ENCODE measurements at regions of chr17 and their contacts with region 1.

Region 1: GRCh38 chr17:32319548-32319905 is 22.4 kb downstream of the C17orf75 start:
- DNase-seq: peak; percentile 74
- ATAC-seq: peak; percentile 95
- H3K4me3 ChIP-seq: no peak overlapping the region
- H3K27ac ChIP-seq: no peak overlapping the region
- H3K4me1 ChIP-seq: no peaks in the 10 kb centered on the region
- H3K27me3 ChIP-seq: peaks cover 4% of the 10 kb centered on the region; the same call in 1 of the 2 replicates
- CTCF ChIP-seq: peak; percentile 82

Region 2: GRCh38 chr17:31510308-31511194 is 809.0 kb before region 1 on chr17:
- CTCF ChIA-PET with region 1: interaction called, 11 read pairs
- POLR2A ChIA-PET with region 1: no interaction called
- intact Hi-C with region 1: no loop called
- DNase-seq: no peak
- ATAC-seq: no peak
- H3K4me3 ChIP-seq: no peak overlapping the region
- H3K27ac ChIP-seq: no peak overlapping the region
- H3K4me1 ChIP-seq: no peaks in the 10 kb centered on the region
- H3K27me3 ChIP-seq: no peaks in the 10 kb centered on the region
- CTCF ChIP-seq: no peak

Region 3: GRCh38 chr17:32206861-32207260 is 112.7 kb before region 1 on chr17:
- CTCF ChIA-PET with region 1: no interaction called
- POLR2A ChIA-PET with region 1: no interaction called
- intact Hi-C with region 1: loop called (anchors 5 kb)
- DNase-seq: no peak
- ATAC-seq: no peak
- H3K4me3 ChIP-seq: no peak overlapping the region
- H3K27ac ChIP-seq: no peak overlapping the region
- H3K4me1 ChIP-seq: peaks cover 5% of the 10 kb centered on the region; the same call in 1 of the 2 replicates
- H3K27me3 ChIP-seq: no peaks in the 10 kb centered on the region
- CTCF ChIP-seq: no peak

Region 4: GRCh38 chr17:32253117-32253611 is 66.4 kb before region 1 on chr17:
- CTCF ChIA-PET with region 1: interaction called, 3 read pairs
- POLR2A ChIA-PET with region 1: no interaction called
- intact Hi-C with region 1: loop called (anchors 1 kb)
- DNase-seq: peak; percentile 80
- ATAC-seq: peak; percentile 78
- H3K4me3 ChIP-seq: no peak overlapping the region
- H3K27ac ChIP-seq: no peak overlapping the region
- H3K4me1 ChIP-seq: no peaks in the 10 kb centered on the region
- H3K27me3 ChIP-seq: no peaks in the 10 kb centered on the region
- CTCF ChIP-seq: peak; percentile 90

Measured in PC-3 (cell line).